Activated CD8-positive, alpha-beta T cell treated with anti-CD3 and anti-CD28 coated beads for 36 hours (primary cell): ENCODE measurements at regions of chr12 and their contacts with region 1.

Region 1: GRCh38 chr12:12356886-12357718 is at the start of gene BORCS5:
- DNase-seq: peak; percentile 99
- ATAC-seq: peak; percentile 97
- H3K4me3 Mint-ChIP-seq: peak within 1 kb of the TSS; percentile 91
- H3K27ac Mint-ChIP-seq: peak within 1 kb of the TSS; percentile 95
- H3K4me1 Mint-ChIP-seq: peaks cover 32% of the 10 kb centered on the region
- H3K27me3 Mint-ChIP-seq: no peaks in the 10 kb centered on the region
- CTCF ChIP-seq: peak; percentile 21
- total RNA-seq, gene BORCS5: 31.5 to 32.9 TPM

Region 2: DNA sequence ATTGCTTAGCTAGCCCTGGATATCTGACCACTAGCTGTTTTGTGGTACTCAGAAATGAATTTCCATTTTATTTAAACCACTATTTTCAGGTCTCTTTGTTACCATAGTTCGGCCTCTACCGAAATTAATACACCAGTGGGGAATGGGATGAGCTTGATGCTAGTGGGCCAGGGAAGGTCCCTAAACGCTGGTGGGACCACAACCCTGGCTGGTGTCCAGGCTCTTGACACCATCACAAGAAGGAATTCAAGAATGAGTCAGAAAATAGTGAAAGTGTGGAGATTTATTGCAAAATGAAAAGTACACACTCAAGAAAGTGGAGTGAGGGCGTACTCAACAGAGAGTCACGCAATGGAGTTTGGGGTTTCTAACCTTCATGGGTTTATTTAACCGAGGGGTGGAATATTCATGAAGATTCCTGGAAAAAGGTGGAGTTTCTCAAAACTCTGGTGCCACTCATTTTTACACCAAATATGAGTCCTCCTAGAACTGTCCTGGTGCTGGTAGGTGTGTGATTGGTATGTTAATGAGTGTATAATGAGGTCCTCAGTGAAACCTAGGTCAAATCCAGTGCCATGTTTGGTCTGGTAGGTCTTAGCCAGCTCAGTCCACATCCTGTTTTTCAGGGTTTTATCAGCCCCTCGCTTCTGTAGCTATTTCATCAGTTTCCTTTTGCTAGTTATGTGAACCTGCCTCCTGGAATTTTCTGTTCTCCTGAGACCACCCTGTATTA is 51.4 kb before region 1 on chr12:
- CTCF ChIA-PET with region 1: no interaction called
- POLR2A ChIA-PET with region 1: no interaction called
- intact Hi-C with region 1: no loop called
- DNase-seq: peak; percentile 4
- ATAC-seq: peak; percentile 60
- H3K4me3 Mint-ChIP-seq: no peak overlapping the region
- H3K27ac Mint-ChIP-seq: no peak overlapping the region
- H3K4me1 Mint-ChIP-seq: no peaks in the 10 kb centered on the region
- H3K27me3 Mint-ChIP-seq: peaks cover 4% of the 10 kb centered on the region
- CTCF ChIP-seq: no peak

Region 3: DNA sequence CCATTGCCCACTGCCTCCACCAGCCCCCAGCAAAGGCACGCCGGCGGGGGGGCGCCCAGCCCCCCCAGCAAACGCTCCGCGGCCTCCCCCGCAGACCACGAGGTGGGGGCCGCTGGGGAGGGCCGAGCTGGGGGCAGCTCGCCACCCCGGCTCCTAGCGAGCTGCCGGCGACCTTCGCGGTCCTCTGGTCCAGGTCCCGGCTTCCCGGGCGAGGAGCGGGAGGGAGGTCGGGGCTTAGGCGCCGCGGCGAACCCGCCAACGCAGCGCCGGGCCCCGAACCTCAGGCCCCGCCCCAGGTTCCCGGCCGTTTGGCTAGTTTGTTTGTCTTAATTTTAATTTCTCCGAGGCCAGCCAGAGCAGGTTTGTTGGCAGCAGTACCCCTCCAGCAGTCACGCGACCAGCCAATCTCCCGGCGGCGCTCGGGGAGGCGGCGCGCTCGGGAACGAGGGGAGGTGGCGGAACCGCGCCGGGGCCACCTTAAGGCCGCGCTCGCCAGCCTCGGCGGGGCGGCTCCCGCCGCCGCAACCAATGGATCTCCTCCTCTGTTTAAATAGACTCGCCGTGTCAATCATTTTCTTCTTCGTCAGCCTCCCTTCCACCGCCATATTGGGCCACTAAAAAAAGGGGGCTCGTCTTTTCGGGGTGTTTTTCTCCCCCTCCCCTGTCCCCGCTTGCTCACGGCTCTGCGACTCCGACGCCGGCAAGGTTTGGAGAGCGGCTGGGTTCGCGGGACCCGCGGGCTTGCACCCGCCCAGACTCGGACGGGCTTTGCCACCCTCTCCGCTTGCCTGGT is 359.9 kb after region 1 on chr12 and contains the start of gene CDKN1B:
- CTCF ChIA-PET with region 1: interaction called, 3 read pairs
- POLR2A ChIA-PET with region 1: interaction called, 18 read pairs
- intact Hi-C with region 1: no loop called
- DNase-seq: peak; percentile 91
- ATAC-seq: peak; percentile 72
- H3K4me3 Mint-ChIP-seq: peak within 1 kb of the TSS; percentile 86
- H3K27ac Mint-ChIP-seq: peak within 1 kb of the TSS; percentile 98
- H3K4me1 Mint-ChIP-seq: peaks cover 44% of the 10 kb centered on the region
- H3K27me3 Mint-ChIP-seq: no peaks in the 10 kb centered on the region
- CTCF ChIP-seq: no peak
- total RNA-seq, gene CDKN1B: 39.9 to 40.8 TPM

Region 4: DNA sequence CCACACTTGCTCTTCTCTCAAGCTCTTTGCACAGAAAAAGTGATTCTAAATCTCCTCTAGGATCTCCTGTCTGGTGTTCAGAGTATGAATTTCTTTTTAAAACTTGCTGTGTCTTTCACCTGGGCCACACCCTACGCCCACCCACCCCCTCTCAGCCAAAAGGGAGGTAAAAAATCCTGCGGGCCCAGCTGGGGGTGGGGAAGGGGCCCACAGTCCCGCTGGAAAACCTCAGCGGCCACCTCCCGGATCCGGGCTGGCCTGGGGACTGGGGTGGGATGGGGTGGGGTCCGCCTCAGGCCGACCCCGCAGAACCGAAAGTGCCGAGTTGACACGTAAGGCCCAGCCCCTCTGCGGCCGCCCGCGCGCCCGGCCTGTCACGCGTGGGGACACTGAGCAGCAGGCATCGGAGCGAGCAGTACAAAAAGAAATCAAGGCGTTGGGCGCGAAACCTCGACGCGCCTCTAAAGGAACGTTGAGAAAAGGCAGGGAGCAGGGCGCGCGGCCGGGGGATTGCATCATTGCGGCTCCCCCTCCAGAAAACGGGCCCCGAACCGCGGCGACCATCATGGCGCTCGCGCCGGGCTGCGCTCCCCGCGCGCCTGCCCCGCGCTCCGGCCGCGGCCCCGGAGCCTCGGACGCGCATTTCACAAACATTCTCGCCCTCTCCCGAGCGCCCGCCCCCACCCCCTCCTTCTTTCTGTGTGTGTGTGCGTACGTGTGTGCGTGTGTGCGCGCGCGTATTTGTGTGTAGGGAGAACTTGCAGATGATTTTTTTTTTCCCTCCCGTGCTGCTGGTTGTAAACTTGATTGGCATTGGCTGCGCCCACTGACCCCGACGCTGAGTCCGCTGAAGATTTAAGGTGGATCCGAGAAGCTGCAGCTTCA is 367.8 kb after region 1 on chr12:
- CTCF ChIA-PET with region 1: interaction called, 5 read pairs
- POLR2A ChIA-PET with region 1: interaction called, 34 read pairs
- intact Hi-C with region 1: no loop called
- DNase-seq: peak; percentile 96
- ATAC-seq: peak; percentile 61
- H3K4me3 Mint-ChIP-seq: peak overlapping the region; percentile 86
- H3K27ac Mint-ChIP-seq: peak overlapping the region; percentile 99
- H3K4me1 Mint-ChIP-seq: peaks cover 44% of the 10 kb centered on the region
- H3K27me3 Mint-ChIP-seq: no peaks in the 10 kb centered on the region
- CTCF ChIP-seq: no peak